Activated B cell treated with CpG ODN at 0.5 μM for 24 hours (primary cell): ENCODE measurements at regions of chr11 and their contacts with region 1.

Region 1: GRCh38 chr11:65366340-65366773 is 11.8 kb downstream of the TIGD3 start:
- DNase-seq: no peak
- ATAC-seq: peak; percentile 72
- H3K4me3 Mint-ChIP-seq: no peak overlapping the region
- H3K27ac Mint-ChIP-seq: no peak overlapping the region
- H3K4me1 Mint-ChIP-seq: peaks cover 25% of the 10 kb centered on the region
- H3K27me3 Mint-ChIP-seq: no peaks in the 10 kb centered on the region
- CTCF ChIP-seq: peak; percentile 60

Region 2: GRCh38 chr11:65274735-65275682 is 91.3 kb before region 1 on chr11:
- CTCF ChIA-PET with region 1: no interaction called
- POLR2A ChIA-PET with region 1: interaction called, 11 read pairs
- intact Hi-C with region 1: no loop called
- DNase-seq: no peak
- ATAC-seq: peak; percentile 40
- H3K4me3 Mint-ChIP-seq: no peak overlapping the region
- H3K27ac Mint-ChIP-seq: no peak overlapping the region
- H3K4me1 Mint-ChIP-seq: peaks cover 5% of the 10 kb centered on the region
- H3K27me3 Mint-ChIP-seq: no peaks in the 10 kb centered on the region
- CTCF ChIP-seq: no peak

Region 3: GRCh38 chr11:65440831-65441499 is 74.6 kb after region 1 on chr11:
- CTCF ChIA-PET with region 1: no interaction called
- POLR2A ChIA-PET with region 1: interaction called, 18 read pairs
- intact Hi-C with region 1: no loop called
- DNase-seq: no peak
- ATAC-seq: peak; percentile 38
- H3K4me3 Mint-ChIP-seq: peak overlapping the region; percentile 77
- H3K27ac Mint-ChIP-seq: peak overlapping the region; percentile 92
- H3K4me1 Mint-ChIP-seq: peaks cover 70% of the 10 kb centered on the region
- H3K27me3 Mint-ChIP-seq: no peaks in the 10 kb centered on the region
- CTCF ChIP-seq: no peak

Region 4: GRCh38 chr11:65471410-65471762 is 105.0 kb after region 1 on chr11:
- CTCF ChIA-PET with region 1: no interaction called
- POLR2A ChIA-PET with region 1: interaction called, 17 read pairs
- intact Hi-C with region 1: no loop called
- DNase-seq: no peak
- ATAC-seq: no peak
- H3K4me3 Mint-ChIP-seq: peak overlapping the region; percentile 66
- H3K27ac Mint-ChIP-seq: peak overlapping the region; percentile 91
- H3K4me1 Mint-ChIP-seq: peaks cover 36% of the 10 kb centered on the region
- H3K27me3 Mint-ChIP-seq: no peaks in the 10 kb centered on the region
- CTCF ChIP-seq: no peak

Region 5: DNA sequence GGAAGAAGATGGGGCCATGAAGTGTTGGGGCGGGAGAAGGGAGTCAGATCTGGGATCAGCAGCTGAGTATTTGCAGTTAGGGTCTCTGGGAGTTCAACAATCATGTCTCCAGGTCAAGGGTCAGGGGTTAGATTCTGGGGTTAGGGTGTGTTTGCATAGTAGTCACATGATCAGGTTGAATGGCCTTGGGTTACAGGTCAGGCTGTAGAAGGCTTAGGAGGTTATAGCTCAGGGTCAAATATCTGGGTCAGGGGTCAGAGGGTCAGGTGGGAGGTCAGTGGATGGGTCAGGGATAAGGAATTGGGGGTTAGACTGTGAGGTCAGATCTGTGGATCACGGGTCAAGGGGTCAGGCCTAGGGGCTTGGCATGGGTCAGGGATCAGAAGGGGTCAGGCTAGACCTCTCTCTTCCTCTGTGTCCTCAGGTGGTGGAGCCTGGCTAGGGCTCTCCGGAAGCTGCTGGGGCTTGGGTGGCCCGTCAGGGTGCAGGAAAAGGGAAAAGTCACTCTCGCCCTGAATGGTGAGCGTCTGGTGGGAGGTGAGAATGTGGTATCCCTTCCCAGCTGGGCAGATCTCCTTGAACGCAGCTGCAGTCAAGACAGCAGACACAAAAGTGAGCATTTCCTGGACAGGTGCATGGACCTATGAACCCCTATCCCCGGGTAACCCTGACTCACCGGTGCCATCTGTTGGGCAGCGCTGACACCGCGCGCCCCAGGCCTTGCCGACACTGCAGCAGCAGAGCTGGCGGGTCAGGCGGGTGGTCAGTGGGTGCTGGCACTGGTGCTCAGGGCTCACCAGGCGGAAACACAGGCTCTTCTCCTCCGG is 185.4 kb after region 1 on chr11:
- CTCF ChIA-PET with region 1: interaction called, 6 read pairs
- POLR2A ChIA-PET with region 1: interaction called, 4 read pairs
- intact Hi-C with region 1: loop called (anchors 1 kb)
- DNase-seq: peak; percentile 69
- ATAC-seq: peak; percentile 83
- H3K4me3 Mint-ChIP-seq: peak overlapping the region; percentile 24
- H3K27ac Mint-ChIP-seq: peak overlapping the region; percentile 59
- H3K4me1 Mint-ChIP-seq: peaks cover 64% of the 10 kb centered on the region
- H3K27me3 Mint-ChIP-seq: no peaks in the 10 kb centered on the region
- CTCF ChIP-seq: no peak